Heart left ventricle (tissue), 16 donors: ENCODE measurements at regions of chr3 and their contacts with region 1.

Region 1: DNA sequence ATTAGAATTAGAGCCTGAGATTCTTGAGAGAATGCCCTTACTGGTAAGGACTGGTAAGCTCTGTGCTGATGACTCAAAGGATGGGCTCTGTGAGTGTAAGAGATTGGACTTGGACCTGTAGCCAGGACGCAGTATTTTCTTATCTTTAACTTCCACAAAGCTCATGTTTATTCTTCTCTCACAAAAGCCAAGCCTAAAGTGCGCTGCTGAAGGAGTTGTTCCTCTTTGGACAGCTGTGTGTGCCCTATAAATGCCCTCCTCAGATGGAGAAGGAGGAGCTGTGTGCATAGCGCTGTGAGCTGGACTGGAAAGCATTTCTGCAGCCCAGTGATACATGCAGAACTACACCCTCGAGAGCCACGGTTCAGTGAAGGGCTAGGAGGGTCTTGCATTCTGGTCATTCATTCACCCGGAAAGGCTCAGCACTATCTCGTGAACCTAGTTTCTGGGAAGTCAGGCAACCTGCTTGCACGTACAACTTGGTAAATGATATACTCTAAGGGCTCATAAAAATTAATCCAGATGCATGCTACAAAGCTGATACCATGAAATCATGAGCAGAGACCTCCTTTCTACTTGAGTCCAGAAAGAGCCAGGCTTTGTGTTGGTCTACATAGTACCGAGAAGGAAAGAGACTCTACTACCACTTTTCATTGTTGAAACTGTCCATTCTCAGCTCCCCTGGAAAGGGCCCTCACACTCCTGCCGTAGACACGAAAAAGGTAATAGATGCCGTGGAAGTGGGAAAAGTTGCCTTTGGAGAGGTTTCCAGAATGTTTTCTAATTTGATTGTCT is 103.0 kb upstream of the TBL1XR1 start:
- DNase-seq: peak in 4 of 5 donors; percentile 20 to 52 (median 36)
- ATAC-seq: peak in 3 of 4 donors; percentile 89 to 96 (median 91)
- H3K4me3 ChIP-seq: peak overlapping the region in 1 of 12 donors; percentile 14
- H3K27ac ChIP-seq: peak overlapping the region in 11 of 12 donors; percentile 2 to 80 (median 49)
- H3K4me1 ChIP-seq: peaks cover 0 to 15% (median 7%) of the 10 kb centered on the region in 12 donors
- H3K27me3 ChIP-seq: no peaks in the 10 kb centered on the region
- CTCF ChIP-seq: no peak
- POLR2A ChIP-seq: no peak

Region 2: GRCh38 chr3:177320765-177321247 is 20.6 kb after region 1 on chr3:
- intact Hi-C with region 1: loop called in 1 of 10 experiments (anchors 2 kb)
- DNase-seq: no peak
- ATAC-seq: peak in 1 of 4 donors; percentile 16
- H3K4me3 ChIP-seq: no peak overlapping the region
- H3K27ac ChIP-seq: peak overlapping the region in 9 of 12 donors; percentile 0 to 56 (median 32)
- H3K4me1 ChIP-seq: peaks cover 2 to 29% (median 15%) of the 10 kb centered on the region in 12 donors
- H3K27me3 ChIP-seq: no peaks in the 10 kb centered on the region
- CTCF ChIP-seq: no peak
- POLR2A ChIP-seq: no peak